ENCODE measurements at regions of chr3 and their contacts with region 1.

Region 1: DNA sequence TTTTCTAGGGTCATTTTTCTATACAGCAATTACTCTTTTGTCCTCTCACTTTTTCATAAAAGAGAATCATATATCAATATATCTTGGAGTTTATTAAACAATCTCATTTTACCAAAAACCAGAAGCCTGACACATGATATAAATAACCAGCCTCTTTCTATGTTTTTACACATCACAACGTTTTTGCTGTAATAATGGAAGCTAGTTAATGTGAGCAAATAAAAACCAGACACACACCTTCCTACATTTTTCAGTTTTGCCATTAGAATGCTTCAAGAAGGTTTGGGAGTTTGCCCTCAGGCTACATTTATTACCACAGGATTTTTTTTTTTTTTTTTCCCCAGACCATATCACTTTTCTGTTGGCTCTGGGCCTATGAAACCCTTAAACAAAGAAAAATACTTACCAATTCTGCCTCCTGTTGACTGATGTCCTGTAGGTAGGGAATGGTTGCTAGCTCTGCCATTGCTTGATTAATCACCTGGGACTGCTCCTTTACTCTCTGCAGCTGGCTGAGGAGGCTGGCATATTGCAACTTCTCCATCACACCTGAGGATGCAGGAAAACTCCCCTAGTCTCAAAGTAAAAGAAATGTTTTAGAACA is 165.5 kb downstream of the ECT2 start:
- DNase-seq: peak in 1 of 2 experiments; percentile 2
- H3K4me3 ChIP-seq: no peak overlapping the region
- H3K27ac ChIP-seq: no peak overlapping the region
- H3K4me1 ChIP-seq: no peaks in the 10 kb centered on the region
- H3K27me3 ChIP-seq: no peaks in the 10 kb centered on the region
- CTCF ChIP-seq: no peak

Region 2: DNA sequence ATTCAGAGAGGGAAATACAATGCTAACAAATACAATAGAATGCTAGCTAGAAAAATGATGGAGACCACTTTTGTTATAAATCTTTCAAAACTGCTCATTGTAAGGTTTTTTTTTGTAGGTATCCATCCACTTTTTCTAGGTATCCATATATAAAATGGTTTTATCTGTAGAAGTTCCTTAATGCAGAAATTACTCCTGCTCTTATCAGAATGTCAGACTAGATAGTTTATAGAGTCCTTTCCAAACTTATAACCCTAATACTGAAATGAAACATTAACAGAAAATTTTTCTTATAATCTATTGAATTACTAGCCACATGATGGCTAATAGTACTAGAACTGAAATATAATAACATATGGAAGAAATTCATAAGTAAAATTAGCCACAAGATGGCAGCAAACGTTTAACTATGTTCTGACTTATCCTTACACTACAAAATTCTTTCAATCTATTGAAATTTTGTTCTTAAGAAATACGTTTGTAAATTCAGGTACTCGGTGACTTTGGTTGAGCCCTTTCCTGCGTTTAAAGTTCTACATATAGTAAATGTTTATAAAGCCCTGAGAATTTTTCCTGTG is 107.0 kb before region 1 on chr3:
- CTCF ChIA-PET with region 1: no interaction called
- POLR2A ChIA-PET with region 1: no interaction called
- intact Hi-C with region 1: no loop called
- DNase-seq: peak in 1 of 2 experiments; percentile 38
- H3K4me3 ChIP-seq: no peak overlapping the region
- H3K27ac ChIP-seq: no peak overlapping the region
- H3K4me1 ChIP-seq: no peaks in the 10 kb centered on the region
- H3K27me3 ChIP-seq: no peaks in the 10 kb centered on the region
- CTCF ChIP-seq: peak; percentile 78

Region 3: GRCh38 chr3:172856766-172857742 is 59.0 kb before region 1 on chr3:
- CTCF ChIA-PET with region 1: no interaction called
- POLR2A ChIA-PET with region 1: no interaction called
- intact Hi-C with region 1: loop called (anchors 2 kb)
- DNase-seq: peak in 1 of 2 experiments; percentile 62
- H3K4me3 ChIP-seq: no peak overlapping the region
- H3K27ac ChIP-seq: no peak overlapping the region
- H3K4me1 ChIP-seq: no peaks in the 10 kb centered on the region
- H3K27me3 ChIP-seq: no peaks in the 10 kb centered on the region
- CTCF ChIP-seq: no peak